ENCODE measurements at regions of chr3 and their contacts with region 1.

Region 1: DNA sequence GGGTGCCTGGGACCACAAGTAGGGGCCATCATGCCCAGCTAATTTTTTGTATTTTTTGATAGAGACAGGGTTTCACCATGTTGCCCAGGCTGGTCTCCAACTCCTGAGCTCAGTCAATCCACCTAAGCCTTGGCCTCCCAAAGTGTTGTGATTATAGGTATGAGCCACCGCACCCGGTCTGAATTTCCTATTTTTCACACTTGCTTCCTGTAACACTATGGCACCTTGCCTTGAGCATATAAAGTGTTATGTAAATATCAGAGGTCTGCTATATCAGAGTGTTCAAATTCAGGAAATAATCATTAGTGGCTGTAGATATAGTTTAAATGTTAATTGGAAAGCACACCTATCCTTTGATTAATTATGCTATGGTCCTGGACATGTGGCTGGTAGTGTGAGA is 165.2 kb downstream of the KCNAB1 start:
- DNase-seq: no peak
- H3K4me3 ChIP-seq: no peak overlapping the region
- CTCF ChIP-seq: no peak
- POLR2A ChIP-seq: no peak

Region 2: GRCh38 chr3:154795582-154795981 is 1490.0 kb before region 1 on chr3:
- intact Hi-C with region 1: no loop called
- DNase-seq: no peak
- H3K4me3 ChIP-seq: no peak overlapping the region
- CTCF ChIP-seq: no peak
- POLR2A ChIP-seq: no peak

Region 3: GRCh38 chr3:155053756-155054155 is 1231.9 kb before region 1 on chr3:
- intact Hi-C with region 1: no loop called
- DNase-seq: no peak
- H3K4me3 ChIP-seq: no peak overlapping the region
- CTCF ChIP-seq: no peak
- POLR2A ChIP-seq: no peak

Region 4: DNA sequence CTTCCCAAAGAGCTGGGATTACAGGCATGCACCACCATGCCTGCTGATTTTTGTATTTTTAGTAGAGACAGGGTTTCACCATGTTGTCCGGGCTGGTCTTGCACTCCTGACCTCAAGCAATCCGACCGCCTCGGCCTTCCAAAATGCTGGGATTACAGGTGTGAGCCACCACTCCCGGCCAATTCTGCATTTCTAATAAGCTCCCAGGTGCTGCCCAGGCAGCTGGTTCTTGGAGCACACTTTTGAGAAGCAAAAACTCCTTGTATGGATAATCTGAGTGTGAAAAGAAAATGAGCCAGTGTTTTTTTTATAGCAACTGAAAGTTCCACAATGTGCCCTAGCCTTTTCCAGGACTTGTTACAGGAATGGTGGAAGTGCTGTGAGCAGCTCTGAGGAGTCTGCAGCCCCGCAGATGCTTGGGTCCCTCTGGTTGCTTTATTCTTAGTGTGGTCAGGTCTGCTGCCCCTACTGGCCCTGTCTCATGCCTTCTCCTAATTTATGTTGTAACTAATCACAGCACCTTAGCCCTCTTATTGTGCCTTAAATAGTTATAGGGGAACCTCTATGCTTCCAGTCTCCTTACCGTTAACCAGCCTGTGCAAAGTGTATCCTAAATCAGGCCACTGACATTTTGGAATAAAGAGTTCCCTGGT is 178.8 kb before region 1 on chr3:
- intact Hi-C with region 1: no loop called
- DNase-seq: no peak
- H3K4me3 ChIP-seq: no peak overlapping the region
- CTCF ChIP-seq: no peak
- POLR2A ChIP-seq: no peak

Region 5: DNA sequence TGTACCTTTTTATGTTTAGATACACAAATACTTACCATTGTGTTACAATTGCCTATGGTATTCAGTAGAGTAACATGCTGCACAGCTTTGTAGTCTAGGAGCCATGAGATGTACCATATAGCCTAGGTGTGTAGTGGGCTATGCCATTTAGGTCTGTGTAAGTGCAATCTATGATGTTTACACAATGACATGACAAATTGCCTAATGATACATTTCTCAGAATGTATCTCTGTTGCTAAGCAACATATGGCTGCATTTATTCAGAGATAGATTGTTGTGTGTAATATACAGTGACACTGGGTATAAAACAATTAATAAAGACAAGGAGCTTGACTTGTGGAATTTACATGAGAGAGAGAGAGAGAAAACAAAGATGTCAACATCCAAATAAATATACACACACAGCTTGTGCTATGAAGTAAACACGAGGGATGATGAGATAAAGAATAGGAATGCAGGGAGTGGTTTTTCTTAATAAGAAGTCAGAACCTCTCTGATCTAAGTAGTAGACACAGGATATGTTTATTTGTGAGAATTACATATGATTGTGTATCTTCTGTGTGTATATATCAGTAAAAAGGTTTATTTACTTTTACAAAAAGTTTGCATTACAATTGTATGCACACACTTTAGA is 55.2 kb before region 1 on chr3:
- intact Hi-C with region 1: no loop called
- DNase-seq: no peak
- H3K4me3 ChIP-seq: no peak overlapping the region
- CTCF ChIP-seq: no peak
- POLR2A ChIP-seq: no peak

Region 6: DNA sequence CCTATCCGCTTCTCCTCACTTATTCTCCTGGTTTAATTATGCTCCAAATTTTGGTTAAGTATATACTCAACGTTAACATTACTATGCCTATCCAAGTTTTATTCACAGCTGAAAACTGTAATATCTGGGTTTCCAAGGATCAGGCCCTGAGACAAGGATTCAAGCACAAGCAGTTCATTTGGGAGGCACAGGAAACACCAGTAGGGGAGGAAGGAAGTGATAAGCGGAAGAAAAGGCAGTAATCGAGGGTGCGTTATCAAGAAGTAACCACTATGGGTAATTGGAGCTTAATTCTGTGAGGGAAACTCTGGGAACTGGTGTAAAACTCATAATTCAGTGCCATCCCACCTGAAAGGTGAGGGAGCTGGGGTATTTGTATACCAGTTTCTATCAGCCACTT is 45.0 kb before region 1 on chr3:
- intact Hi-C with region 1: loop called (anchors 2 kb)
- DNase-seq: no peak
- H3K4me3 ChIP-seq: no peak overlapping the region
- CTCF ChIP-seq: no peak
- POLR2A ChIP-seq: no peak